Endothelial cell of umbilical vein (primary cell): ENCODE measurements at regions of chr3 and their contacts with region 1.

Region 1: DNA sequence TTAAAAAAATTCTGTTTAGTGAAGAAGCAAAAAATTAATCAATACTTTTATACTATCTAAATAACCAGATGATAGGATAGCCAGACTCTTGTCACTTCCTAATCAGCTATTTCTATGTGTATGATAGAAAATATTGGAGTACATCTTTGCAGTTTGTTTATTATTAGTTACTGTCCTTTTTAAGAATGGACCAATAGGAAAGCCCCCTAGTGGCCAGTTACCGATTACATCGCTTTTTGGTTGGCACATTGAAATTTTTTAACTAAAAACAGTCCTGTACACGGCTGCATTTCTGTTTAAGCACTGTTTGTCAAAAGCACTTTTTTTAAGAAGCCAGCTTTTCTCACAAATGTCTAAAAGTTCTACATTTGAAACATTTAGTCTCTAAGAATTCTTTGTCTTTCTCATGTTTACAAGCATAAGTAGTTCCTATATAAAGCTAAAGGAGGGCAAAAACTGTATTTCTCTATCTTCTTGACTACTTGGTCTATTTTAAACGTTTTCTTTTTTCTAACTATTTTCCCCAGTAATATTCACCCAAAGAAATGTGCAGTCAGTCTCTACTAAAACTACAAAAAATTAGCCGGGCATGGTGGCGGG is 253.2 kb upstream of the LRTM1 start:
- DNase-seq: peak; percentile 12
- H3K4me3 ChIP-seq: no peak overlapping the region
- H3K27ac ChIP-seq: no peak overlapping the region
- H3K4me1 ChIP-seq: no peaks in the 10 kb centered on the region
- H3K27me3 ChIP-seq: no peaks in the 10 kb centered on the region
- CTCF ChIP-seq: peak; percentile 39 to 52
- POLR2A ChIP-seq: no peak

Region 2: GRCh38 chr3:53938645-53939044 is 1242.4 kb before region 1 on chr3:
- CTCF ChIA-PET with region 1: interaction called, 20 read pairs
- POLR2A ChIA-PET with region 1: no interaction called
- dilution Hi-C with region 1: no loop called
- intact Hi-C with region 1: no loop called
- DNase-seq: peak; percentile 39
- H3K4me3 ChIP-seq: no peak overlapping the region
- H3K27ac ChIP-seq: no peak overlapping the region
- H3K4me1 ChIP-seq: no peaks in the 10 kb centered on the region
- H3K27me3 ChIP-seq: no peaks in the 10 kb centered on the region
- CTCF ChIP-seq: peak; percentile 51 to 52
- POLR2A ChIP-seq: no peak

Region 3: GRCh38 chr3:54427941-54428871 is 752.8 kb before region 1 on chr3:
- CTCF ChIA-PET with region 1: no interaction called
- POLR2A ChIA-PET with region 1: no interaction called
- dilution Hi-C with region 1: no loop called
- intact Hi-C with region 1: loop called (anchors 2 kb)
- DNase-seq: peak; percentile 41
- H3K4me3 ChIP-seq: no peak overlapping the region
- H3K27ac ChIP-seq: no peak overlapping the region
- H3K4me1 ChIP-seq: no peaks in the 10 kb centered on the region
- H3K27me3 ChIP-seq: no peaks in the 10 kb centered on the region
- CTCF ChIP-seq: peak; percentile 62 to 67
- POLR2A ChIP-seq: no peak

Region 4: DNA sequence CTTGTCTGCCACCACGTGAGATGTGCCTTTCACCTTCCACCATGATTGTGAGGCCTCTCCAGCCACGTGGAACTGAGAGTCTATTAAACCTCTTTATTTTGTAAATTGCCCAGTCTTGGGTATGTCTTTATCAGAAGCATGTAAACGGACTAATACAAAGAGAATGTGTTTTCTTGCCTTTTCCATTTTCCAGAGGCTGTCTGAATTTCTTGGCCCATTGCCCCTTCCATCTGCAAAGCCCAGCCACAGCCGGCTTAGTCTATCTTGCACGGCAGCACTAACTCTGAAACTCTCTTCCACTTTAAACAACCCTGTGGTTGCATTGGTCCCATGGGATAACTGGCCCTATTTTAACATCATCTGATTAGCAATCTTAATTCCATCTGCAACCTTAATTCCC is 468.5 kb before region 1 on chr3:
- CTCF ChIA-PET with region 1: no interaction called
- POLR2A ChIA-PET with region 1: no interaction called
- dilution Hi-C with region 1: no loop called
- intact Hi-C with region 1: no loop called
- DNase-seq: no peak
- H3K4me3 ChIP-seq: no peak overlapping the region
- H3K27ac ChIP-seq: no peak overlapping the region
- H3K4me1 ChIP-seq: no peaks in the 10 kb centered on the region
- H3K27me3 ChIP-seq: no peaks in the 10 kb centered on the region
- CTCF ChIP-seq: no peak
- POLR2A ChIP-seq: no peak

Region 5: DNA sequence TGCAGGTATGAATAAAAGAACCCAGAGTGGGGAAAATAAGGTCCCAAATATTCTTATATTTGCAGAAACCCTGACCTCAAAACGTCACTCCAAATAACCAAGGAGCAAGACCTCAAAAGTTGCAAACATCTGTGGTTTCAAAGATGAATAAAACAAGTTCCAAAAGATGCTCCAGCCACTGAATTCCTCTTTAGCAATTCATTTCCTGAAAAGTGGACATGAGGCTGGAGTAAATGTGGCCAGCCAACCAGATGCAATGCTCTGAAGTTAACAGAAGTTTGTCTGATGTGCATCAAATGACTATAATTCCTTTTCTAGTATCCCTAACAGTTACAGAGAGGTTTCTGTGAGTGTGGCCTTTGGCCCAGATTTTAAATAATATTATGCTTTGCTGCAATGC is 377.3 kb after region 1 on chr3:
- CTCF ChIA-PET with region 1: no interaction called
- POLR2A ChIA-PET with region 1: no interaction called
- dilution Hi-C with region 1: no loop called
- intact Hi-C with region 1: no loop called
- DNase-seq: no peak
- H3K4me3 ChIP-seq: no peak overlapping the region
- H3K27ac ChIP-seq: no peak overlapping the region
- H3K4me1 ChIP-seq: no peaks in the 10 kb centered on the region
- H3K27me3 ChIP-seq: no peaks in the 10 kb centered on the region
- CTCF ChIP-seq: no peak
- POLR2A ChIP-seq: no peak